ENCODE measurements at regions of chr2 and their contacts with region 1.

Region 1: GRCh38 chr2:64311948-64312621 is 141.9 kb upstream of the LGALSL start:
- DNase-seq: peak; percentile 89
- H3K4me3 ChIP-seq: no peak overlapping the region
- H3K27ac ChIP-seq: no peak overlapping the region
- H3K4me1 ChIP-seq: no peaks in the 10 kb centered on the region
- H3K27me3 ChIP-seq: peaks cover 0 to 7% of the 10 kb centered on the region in 2 experiments
- CTCF ChIP-seq: peak; percentile 48 to 68
- POLR2A ChIP-seq: no peak

Region 2: DNA sequence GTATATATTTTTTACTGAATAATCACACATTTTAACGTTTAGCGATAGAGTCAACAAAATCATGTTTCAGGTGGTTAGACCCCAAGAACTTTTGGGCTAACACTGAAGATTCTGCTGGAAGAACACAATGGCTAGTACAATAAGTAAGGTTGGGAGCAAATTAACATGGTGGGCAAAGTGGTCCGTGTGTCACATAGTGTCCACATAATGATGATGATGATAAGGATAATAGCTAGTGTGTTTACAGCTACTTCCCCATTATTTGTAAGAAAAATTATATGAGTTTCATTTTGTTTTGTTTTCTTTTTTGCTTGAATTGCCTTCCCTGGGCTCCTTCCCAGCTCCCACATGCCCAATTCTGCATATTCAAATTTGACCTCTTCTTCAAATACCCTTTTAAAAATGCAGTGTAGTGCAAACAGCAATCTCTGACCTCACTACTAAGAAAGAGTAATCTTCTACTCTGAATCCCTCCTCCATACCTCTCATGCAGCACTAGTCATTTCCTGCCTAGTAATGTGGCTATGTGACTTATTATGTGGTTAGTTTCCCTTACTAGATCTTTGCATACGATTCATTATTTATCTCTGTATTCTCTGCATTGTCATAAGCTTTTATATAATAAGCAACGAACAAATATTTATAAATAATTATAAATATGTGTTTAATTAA is 275.9 kb before region 1 on chr2:
- CTCF ChIA-PET with region 1: interaction called, 3 read pairs
- POLR2A ChIA-PET with region 1: no interaction called
- dilution Hi-C with region 1: loop called (anchors 25 kb)
- intact Hi-C with region 1: no loop called
- DNase-seq: peak; percentile 61
- H3K4me3 ChIP-seq: no peak overlapping the region
- H3K27ac ChIP-seq: no peak overlapping the region
- H3K4me1 ChIP-seq: peaks cover 15% of the 10 kb centered on the region
- H3K27me3 ChIP-seq: no peaks in the 10 kb centered on the region
- CTCF ChIP-seq: no peak
- POLR2A ChIP-seq: no peak

Region 3: DNA sequence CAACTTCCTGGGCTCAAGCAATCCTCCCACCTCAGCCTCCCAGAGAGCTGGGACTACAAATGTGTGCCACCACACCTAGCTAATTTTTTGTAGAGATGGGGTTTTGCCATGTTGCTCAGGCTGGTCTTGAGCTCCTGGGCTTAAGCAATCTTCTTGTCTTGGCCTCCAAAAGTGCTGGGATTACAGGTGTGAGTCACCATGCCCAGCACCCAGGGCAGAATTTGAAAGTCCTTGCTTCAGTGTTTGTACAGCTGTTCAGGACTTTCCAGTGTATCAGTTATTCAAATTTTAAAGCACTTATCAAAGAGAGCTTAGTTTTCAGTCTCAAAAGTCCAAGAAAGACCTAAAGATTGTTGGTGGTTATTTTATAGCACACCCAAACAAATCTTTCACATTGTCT is 249.3 kb before region 1 on chr2:
- CTCF ChIA-PET with region 1: interaction called, 18 read pairs
- POLR2A ChIA-PET with region 1: no interaction called
- dilution Hi-C with region 1: no loop called
- intact Hi-C with region 1: no loop called
- DNase-seq: peak; percentile 65
- H3K4me3 ChIP-seq: no peak overlapping the region
- H3K27ac ChIP-seq: peak overlapping the region; percentile 99
- H3K4me1 ChIP-seq: peaks cover 24% of the 10 kb centered on the region
- H3K27me3 ChIP-seq: no peaks in the 10 kb centered on the region
- CTCF ChIP-seq: no peak
- POLR2A ChIP-seq: no peak

Region 4: GRCh38 chr2:64144057-64145013 is 167.8 kb before region 1 on chr2 and contains the start of gene PELI1:
- CTCF ChIA-PET with region 1: interaction called, 36 read pairs
- POLR2A ChIA-PET with region 1: interaction called, 3 read pairs
- dilution Hi-C with region 1: no loop called
- intact Hi-C with region 1: loop called (anchors 1 kb)
- DNase-seq: peak; percentile 99
- H3K4me3 ChIP-seq: peak within 1 kb of the TSS; percentile 70 to 90 (median 83)
- H3K27ac ChIP-seq: peak within 1 kb of the TSS; percentile 74
- H3K4me1 ChIP-seq: peaks cover 18% of the 10 kb centered on the region
- H3K27me3 ChIP-seq: peaks cover 0 to 4% of the 10 kb centered on the region in 2 experiments
- CTCF ChIP-seq: peak in 1 of 2 donors; percentile 34
- POLR2A ChIP-seq: peak; percentile 95
- total RNA-seq, gene PELI1: 30.9 and 39.9 TPM in 2 replicates

Region 5: DNA sequence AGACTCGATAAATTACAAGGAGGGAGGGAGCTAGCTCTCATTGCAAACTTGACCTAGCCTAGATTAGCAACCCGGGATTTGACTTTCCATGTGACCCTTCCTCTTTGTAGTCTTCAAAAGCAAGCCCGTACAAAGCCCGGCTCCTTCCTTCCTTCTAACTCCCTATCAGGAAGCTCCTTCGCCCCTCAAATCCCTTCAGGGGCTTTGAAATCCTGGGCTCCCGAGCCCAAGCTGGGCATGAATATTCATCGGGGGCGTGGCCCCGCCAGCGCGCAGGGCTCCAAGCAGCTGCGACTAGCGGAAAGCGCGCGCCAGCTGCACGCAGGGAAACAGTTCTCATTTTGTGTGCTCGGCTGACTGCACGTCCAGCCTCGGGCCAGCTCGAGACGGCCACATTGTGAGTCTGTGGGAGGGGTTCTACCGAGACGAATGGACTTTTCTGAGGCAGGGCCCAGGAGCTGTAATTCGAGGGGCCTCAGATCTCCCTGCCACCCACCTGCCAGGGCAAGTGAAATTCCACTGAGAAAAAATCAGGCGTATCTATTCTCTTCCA is 83.9 kb before region 1 on chr2:
- CTCF ChIA-PET with region 1: interaction called, 20 read pairs
- POLR2A ChIA-PET with region 1: no interaction called
- dilution Hi-C with region 1: no loop called
- intact Hi-C with region 1: no loop called
- DNase-seq: peak; percentile 84
- H3K4me3 ChIP-seq: peak overlapping the region; percentile 32 to 72 (median 70)
- H3K27ac ChIP-seq: peak overlapping the region; percentile 10
- H3K4me1 ChIP-seq: peaks cover 9% of the 10 kb centered on the region
- H3K27me3 ChIP-seq: no peaks in the 10 kb centered on the region
- CTCF ChIP-seq: no peak
- POLR2A ChIP-seq: peak; percentile 42

Region 6: GRCh38 chr2:64267699-64268098 is 44.4 kb before region 1 on chr2:
- CTCF ChIA-PET with region 1: interaction called, 16 read pairs
- POLR2A ChIA-PET with region 1: no interaction called
- dilution Hi-C with region 1: no loop called
- intact Hi-C with region 1: loop called (anchors 1 kb)
- DNase-seq: peak; percentile 73
- H3K4me3 ChIP-seq: no peak overlapping the region
- H3K27ac ChIP-seq: peak overlapping the region; percentile 96
- H3K4me1 ChIP-seq: peaks cover 47% of the 10 kb centered on the region
- H3K27me3 ChIP-seq: no peaks in the 10 kb centered on the region
- CTCF ChIP-seq: no peak
- POLR2A ChIP-seq: no peak

Region 7: DNA sequence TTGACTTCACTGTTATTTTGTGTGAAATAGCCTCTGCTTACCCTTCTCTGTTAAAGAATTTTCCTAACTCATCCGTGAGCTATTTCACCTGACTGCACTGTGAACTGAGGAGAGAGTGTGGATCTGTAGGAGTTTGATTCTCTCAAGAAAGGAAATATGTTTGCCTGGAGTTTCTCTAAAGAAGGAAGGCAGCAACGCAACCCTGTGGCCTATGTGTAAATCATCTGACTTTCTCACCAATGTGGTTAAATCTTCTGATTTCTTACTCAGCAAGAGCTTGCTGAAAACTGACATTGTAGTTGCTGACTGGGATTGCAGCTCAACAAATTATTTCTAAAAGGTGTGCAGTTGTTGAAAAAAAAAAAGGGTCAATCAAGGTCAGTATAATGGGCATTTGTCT is 13.9 kb before region 1 on chr2:
- CTCF ChIA-PET with region 1: interaction called, 14 read pairs
- POLR2A ChIA-PET with region 1: interaction called, 6 read pairs
- dilution Hi-C with region 1: no loop called
- intact Hi-C with region 1: no loop called
- DNase-seq: no peak
- H3K4me3 ChIP-seq: no peak overlapping the region
- H3K27ac ChIP-seq: no peak overlapping the region
- H3K4me1 ChIP-seq: no peaks in the 10 kb centered on the region
- H3K27me3 ChIP-seq: peaks cover 0 to 11% of the 10 kb centered on the region in 2 experiments
- CTCF ChIP-seq: no peak
- POLR2A ChIP-seq: no peak

Region 8: GRCh38 chr2:64523666-64524603 is 211.8 kb after region 1 on chr2 and contains the start of gene AFTPH:
- CTCF ChIA-PET with region 1: no interaction called
- POLR2A ChIA-PET with region 1: no interaction called
- dilution Hi-C with region 1: no loop called
- intact Hi-C with region 1: no loop called
- DNase-seq: peak; percentile 100
- H3K4me3 ChIP-seq: peak within 1 kb of the TSS; percentile 93 to 98 (median 97)
- H3K27ac ChIP-seq: peak within 1 kb of the TSS; percentile 82
- H3K4me1 ChIP-seq: peaks cover 12% of the 10 kb centered on the region
- H3K27me3 ChIP-seq: peaks cover 7 to 8% of the 10 kb centered on the region in 2 experiments
- CTCF ChIP-seq: no peak
- POLR2A ChIP-seq: peak; percentile 46
- total RNA-seq, gene AFTPH: 15.3 and 16.7 TPM in 2 replicates